ENCODE measurements at regions of chr1 and their contacts with region 1.

Region 1: DNA sequence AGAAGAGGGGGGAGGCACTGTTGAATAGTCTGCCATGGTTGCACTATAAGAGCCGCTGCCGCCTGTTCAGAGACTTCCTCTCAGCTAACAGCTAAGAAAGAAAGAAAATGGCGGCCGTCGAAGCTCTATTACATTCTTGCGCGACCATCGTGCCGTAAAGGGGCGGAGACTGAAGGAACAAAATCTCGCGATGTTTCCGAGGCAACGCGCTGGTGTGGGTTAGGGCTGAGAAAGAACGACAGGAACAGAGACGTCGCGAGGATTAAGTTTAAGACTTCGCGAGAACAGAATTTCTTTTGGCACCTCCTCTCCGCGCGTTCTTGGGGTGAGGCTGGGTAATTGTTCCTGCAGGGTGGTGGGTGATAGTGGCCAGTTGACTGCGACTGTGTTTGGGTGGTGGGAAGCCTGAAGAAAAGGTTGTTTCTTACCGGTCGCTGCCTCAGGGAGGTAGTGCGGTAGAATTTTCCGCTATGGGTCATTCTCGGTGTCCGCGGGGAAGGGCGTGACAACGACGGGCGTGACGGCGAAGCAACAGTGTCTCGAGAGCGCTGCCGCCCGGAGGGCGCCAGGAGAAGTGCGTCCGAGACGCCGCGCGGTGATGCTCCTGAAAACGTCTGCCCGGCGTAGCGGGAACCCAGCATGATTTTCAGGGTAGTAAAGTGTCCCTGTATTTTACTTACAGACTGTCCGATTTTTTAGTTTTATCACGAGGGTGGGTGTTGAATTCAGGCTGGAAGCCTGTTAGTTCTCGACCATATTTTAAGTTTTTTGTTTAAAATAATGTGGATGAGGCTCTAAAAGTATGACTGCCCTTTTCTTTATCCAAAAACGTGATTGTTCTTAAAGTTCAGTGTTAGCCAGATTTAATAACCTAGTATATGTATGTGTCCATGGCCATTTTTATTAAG is at the start of gene FUBP1:
- DNase-seq: peak; percentile 98
- H3K4me3 Mint-ChIP-seq: no peak within 1 kb of the TSS
- H3K27ac Mint-ChIP-seq: no peak within 1 kb of the TSS
- H3K4me1 Mint-ChIP-seq: peaks cover 38% of the 10 kb centered on the region
- H3K27me3 Mint-ChIP-seq: no peaks in the 10 kb centered on the region
- total RNA-seq, gene FUBP1: 204 to 220 TPM

Region 2: GRCh38 chr1:77219166-77219887 is 759.9 kb before region 1 on chr1 and contains the start of gene PIGK:
- CTCF ChIA-PET with region 1: no interaction called
- POLR2A ChIA-PET with region 1: no interaction called
- intact Hi-C with region 1: loop called (anchors 1 kb)
- DNase-seq: peak; percentile 94
- H3K4me3 Mint-ChIP-seq: peak within 1 kb of the TSS; percentile 93
- H3K27ac Mint-ChIP-seq: peak within 1 kb of the TSS; percentile 89
- H3K4me1 Mint-ChIP-seq: peaks cover 38% of the 10 kb centered on the region
- H3K27me3 Mint-ChIP-seq: no peaks in the 10 kb centered on the region
- total RNA-seq, gene PIGK: 23.9 to 26.5 TPM

Region 3: DNA sequence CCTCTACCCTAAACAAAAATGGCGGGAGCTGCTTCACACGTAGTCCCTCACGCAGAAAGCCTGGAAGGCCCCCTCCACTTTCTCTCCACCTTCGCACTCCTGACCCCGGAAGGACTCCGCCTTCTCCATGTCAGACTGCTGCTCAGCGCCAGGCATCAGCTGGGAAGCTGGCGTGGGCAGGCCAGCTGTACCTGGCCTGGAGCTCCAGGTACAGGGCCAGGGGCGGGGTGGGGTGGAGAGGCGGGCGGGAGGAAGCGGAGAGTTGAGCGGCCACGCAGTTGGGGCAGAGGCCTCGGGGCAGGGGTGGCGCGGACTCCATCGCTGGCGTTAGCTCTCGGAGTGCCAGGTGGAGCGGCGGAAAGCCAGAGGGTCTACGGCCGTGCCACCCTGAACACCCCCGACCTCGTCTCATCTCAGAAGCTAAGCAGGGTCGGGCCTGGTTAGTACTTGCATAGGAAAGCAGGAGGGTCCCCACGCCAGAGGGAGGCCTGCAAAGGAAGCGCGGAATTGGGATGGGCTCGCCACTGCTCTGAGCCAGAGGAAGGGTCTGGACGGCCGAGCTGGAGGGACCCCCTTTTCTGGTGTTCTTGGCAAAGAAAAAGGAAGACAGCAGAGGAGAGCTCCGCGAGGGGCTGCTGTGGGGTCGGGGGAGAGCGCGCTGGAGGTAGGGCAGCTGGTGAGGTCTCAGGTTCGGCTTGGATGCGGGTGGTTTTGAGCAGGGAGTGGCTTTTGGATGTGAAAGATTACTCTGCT is 199.5 kb before region 1 on chr1 and contains the start of gene MIGA1:
- CTCF ChIA-PET with region 1: no interaction called
- POLR2A ChIA-PET with region 1: no interaction called
- intact Hi-C with region 1: loop called (anchors 1 kb)
- DNase-seq: peak; percentile 90
- H3K4me3 Mint-ChIP-seq: peak within 1 kb of the TSS; percentile 87
- H3K27ac Mint-ChIP-seq: peak within 1 kb of the TSS; percentile 80
- H3K4me1 Mint-ChIP-seq: peaks cover 34% of the 10 kb centered on the region
- H3K27me3 Mint-ChIP-seq: no peaks in the 10 kb centered on the region
- total RNA-seq, gene MIGA1: 9.1 to 9.9 TPM

Region 4: DNA sequence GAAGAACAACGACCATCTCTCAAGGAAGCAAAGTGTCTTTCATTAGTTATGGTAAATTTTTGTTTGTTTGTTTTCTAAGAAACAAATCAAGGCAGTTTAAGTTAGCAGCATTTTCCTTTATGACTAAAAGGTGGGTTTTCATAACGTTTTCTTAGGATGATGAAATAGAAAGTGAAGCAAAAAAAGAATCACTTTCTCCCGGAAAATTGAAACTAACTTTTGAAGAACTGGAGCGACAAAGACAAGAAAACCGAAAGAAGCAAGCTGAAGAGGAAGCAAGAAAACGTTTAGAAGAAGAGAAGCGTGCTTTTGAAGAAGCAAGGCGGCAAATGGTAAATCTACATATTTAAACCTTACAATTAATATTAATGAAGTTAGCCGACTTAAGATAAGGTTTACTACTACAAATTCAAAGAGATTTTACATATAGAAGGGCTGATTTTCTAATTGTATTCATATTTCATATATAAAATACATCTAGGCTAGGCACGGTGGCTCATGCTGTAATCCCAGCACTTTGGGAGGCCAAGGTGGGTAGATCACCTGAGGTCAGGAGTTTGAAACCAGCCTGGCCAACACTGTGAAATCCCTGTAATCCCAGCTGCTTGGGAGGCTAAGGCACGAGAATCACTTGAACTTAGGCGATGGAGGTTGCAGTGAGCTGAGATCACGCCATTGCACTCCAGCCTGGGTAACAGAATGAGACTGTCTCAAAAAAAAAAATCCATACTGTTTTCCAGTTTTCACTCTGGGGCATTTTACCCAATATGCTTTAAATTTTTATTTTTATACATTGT is 52.5 kb before region 1 on chr1:
- CTCF ChIA-PET with region 1: no interaction called
- POLR2A ChIA-PET with region 1: no interaction called
- intact Hi-C with region 1: loop called (anchors 1 kb)
- DNase-seq: no peak
- H3K4me3 Mint-ChIP-seq: peak overlapping the region; percentile 57
- H3K27ac Mint-ChIP-seq: no peak overlapping the region
- H3K4me1 Mint-ChIP-seq: peaks cover 9% of the 10 kb centered on the region
- H3K27me3 Mint-ChIP-seq: no peaks in the 10 kb centered on the region

Region 5: DNA sequence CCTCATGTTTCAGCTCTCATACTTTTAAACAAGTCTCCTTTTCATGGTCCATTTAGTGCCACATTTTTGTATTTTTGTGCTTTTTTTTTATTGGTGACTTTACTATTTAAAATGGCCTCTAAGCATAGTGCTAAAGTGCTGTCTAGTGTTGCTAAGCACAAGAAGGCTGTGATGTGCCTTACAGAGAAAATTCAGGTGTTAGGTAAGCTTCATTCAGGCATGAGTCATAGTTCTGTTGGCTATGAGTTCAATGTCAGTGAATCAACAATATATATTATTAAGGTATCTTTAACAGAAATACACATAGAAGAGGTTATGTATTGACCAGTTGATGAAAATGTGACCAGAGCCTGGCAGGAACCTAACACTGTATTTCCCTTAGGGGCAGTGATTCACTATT is 12.4 kb after region 1 on chr1:
- CTCF ChIA-PET with region 1: no interaction called
- POLR2A ChIA-PET with region 1: interaction called, 9 read pairs
- intact Hi-C with region 1: loop called (anchors 1 kb)
- DNase-seq: no peak
- H3K4me3 Mint-ChIP-seq: no peak overlapping the region
- H3K27ac Mint-ChIP-seq: no peak overlapping the region
- H3K4me1 Mint-ChIP-seq: peaks cover 28% of the 10 kb centered on the region
- H3K27me3 Mint-ChIP-seq: no peaks in the 10 kb centered on the region

Region 6: GRCh38 chr1:78040484-78041089 is 61.4 kb after region 1 on chr1:
- CTCF ChIA-PET with region 1: interaction called, 4 read pairs
- POLR2A ChIA-PET with region 1: no interaction called
- intact Hi-C with region 1: loop called (anchors 2 kb)
- DNase-seq: no peak
- H3K4me3 Mint-ChIP-seq: no peak overlapping the region
- H3K27ac Mint-ChIP-seq: no peak overlapping the region
- H3K4me1 Mint-ChIP-seq: peaks cover 18% of the 10 kb centered on the region
- H3K27me3 Mint-ChIP-seq: peaks cover 24% of the 10 kb centered on the region

Region 7: GRCh38 chr1:78617615-78618026 is 638.4 kb after region 1 on chr1:
- CTCF ChIA-PET with region 1: no interaction called
- POLR2A ChIA-PET with region 1: no interaction called
- intact Hi-C with region 1: loop called (anchors 10 kb)
- DNase-seq: peak; percentile 44
- H3K4me3 Mint-ChIP-seq: no peak overlapping the region
- H3K27ac Mint-ChIP-seq: no peak overlapping the region
- H3K4me1 Mint-ChIP-seq: peaks cover 34% of the 10 kb centered on the region
- H3K27me3 Mint-ChIP-seq: no peaks in the 10 kb centered on the region

Measured in activated CD4-positive, alpha-beta memory T cell treated with anti-CD3 and anti-CD28 coated beads for 36 hours (primary cell).